CD4-positive, alpha-beta T cell (primary cell): ENCODE measurements at regions of chr16 and their contacts with region 1.

Region 1: GRCh38 chr16:84754353-84754856 is 54.6 kb downstream of the USP10 start:
- DNase-seq: peak in 13 of 14 experiments; percentile 22 to 92 (median 57)
- ATAC-seq: peak; percentile 58
- H3K4me3 ChIP-seq: peak overlapping the region; percentile 24
- H3K4me3 Mint-ChIP-seq: peak overlapping the region; percentile 72
- H3K27ac ChIP-seq: no peak overlapping the region
- H3K27ac Mint-ChIP-seq: peak overlapping the region; percentile 68
- H3K4me1 ChIP-seq: peaks cover 54% of the 10 kb centered on the region
- H3K4me1 Mint-ChIP-seq: peaks cover 89% of the 10 kb centered on the region
- H3K27me3 ChIP-seq: no peaks in the 10 kb centered on the region
- H3K27me3 Mint-ChIP-seq: no peaks in the 10 kb centered on the region
- CTCF ChIP-seq: peak; percentile 86

Region 2: DNA sequence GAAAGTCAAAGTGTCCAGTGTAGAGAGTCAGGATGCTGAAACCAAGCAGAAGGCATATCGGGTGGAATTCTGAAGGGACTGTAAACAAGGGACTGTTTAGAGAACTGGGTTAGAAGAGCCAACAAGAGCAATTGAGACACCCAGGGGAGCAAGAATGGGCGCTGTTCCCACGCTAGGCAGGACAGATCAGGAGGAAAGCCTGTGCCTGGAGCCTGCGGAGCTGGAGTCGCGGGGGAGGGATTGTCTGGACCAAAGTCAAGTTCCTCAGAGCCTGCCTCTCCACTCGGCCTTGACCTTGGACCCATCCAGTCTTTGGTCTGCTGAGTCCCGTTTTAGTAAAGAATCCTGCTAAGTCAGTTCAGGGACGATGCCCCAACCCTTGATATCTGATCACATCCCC is 120.8 kb before region 1 on chr16:
- CTCF ChIA-PET with region 1: no interaction called
- POLR2A ChIA-PET with region 1: no interaction called
- intact Hi-C with region 1: no loop called
- DNase-seq: no peak
- ATAC-seq: no peak
- H3K4me3 ChIP-seq: no peak overlapping the region
- H3K4me3 Mint-ChIP-seq: no peak overlapping the region
- H3K27ac ChIP-seq: no peak overlapping the region
- H3K27ac Mint-ChIP-seq: no peak overlapping the region
- H3K4me1 ChIP-seq: peaks cover 31% of the 10 kb centered on the region
- H3K4me1 Mint-ChIP-seq: peaks cover 58% of the 10 kb centered on the region
- H3K27me3 ChIP-seq: no peaks in the 10 kb centered on the region
- H3K27me3 Mint-ChIP-seq: no peaks in the 10 kb centered on the region
- CTCF ChIP-seq: no peak

Region 3: GRCh38 chr16:84738255-84739038 is 16.0 kb before region 1 on chr16:
- CTCF ChIA-PET with region 1: interaction called, 29 read pairs
- POLR2A ChIA-PET with region 1: no interaction called
- intact Hi-C with region 1: no loop called
- DNase-seq: peak; percentile 62 to 90 (median 66)
- ATAC-seq: peak; percentile 73
- H3K4me3 ChIP-seq: no peak overlapping the region
- H3K4me3 Mint-ChIP-seq: peak overlapping the region; percentile 3
- H3K27ac ChIP-seq: no peak overlapping the region
- H3K27ac Mint-ChIP-seq: peak overlapping the region; percentile 25
- H3K4me1 ChIP-seq: peaks cover 40% of the 10 kb centered on the region
- H3K4me1 Mint-ChIP-seq: peaks cover 37% of the 10 kb centered on the region
- H3K27me3 ChIP-seq: no peaks in the 10 kb centered on the region
- H3K27me3 Mint-ChIP-seq: no peaks in the 10 kb centered on the region
- CTCF ChIP-seq: peak; percentile 95

Region 4: DNA sequence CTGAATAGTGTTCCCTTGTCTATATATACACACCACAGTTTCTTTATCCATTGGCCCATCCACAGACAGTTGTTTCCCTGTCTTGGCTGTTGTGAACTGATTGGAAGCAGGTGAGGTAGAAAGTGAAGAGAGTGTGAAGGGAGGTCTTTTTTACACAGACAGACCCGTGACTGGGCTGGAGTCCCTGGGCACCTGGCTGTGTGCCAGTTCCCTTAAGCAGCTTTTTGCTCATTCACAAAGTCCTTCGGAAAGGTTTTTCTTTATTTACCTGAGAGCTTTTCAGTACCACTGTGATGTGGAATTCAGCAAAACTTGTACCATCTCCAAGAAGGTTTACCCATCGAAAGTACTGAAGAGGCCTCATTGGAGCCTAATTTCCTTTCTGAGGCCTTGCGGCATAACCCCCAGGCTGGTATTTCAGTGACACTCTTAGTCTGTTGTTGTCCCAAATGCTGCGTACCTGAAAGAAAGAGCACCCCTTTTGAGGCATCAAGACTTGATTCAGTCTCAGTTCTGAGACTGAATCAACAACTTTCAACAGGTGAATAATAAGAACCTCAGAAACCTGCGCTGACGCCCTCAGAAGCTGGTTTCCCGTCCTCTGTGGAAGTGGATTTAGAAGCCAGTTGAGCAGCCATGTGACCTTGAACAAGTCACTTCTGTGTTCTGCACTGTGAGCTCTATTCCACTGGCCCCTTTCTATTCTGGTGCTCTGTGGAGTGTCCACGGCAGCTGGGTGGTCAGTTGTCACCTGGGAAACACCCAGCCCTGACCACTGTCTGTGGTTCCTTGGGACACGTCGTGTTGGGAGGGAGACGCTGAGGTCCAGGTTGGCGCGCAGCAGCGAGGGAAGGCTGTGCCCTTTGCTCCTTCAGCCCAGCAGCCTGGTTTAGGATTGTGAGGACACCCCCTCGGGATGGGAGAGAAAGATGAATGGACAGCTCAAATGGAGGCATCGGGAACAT is 11.5 kb after region 1 on chr16:
- CTCF ChIA-PET with region 1: interaction called, 17 read pairs
- POLR2A ChIA-PET with region 1: no interaction called
- intact Hi-C with region 1: no loop called
- DNase-seq: peak in 5 of 14 experiments; percentile 18 to 50 (median 29)
- ATAC-seq: peak; percentile 65
- H3K4me3 ChIP-seq: no peak overlapping the region
- H3K4me3 Mint-ChIP-seq: peak overlapping the region; percentile 42
- H3K27ac ChIP-seq: peak overlapping the region; percentile 29 to 31
- H3K27ac Mint-ChIP-seq: peak overlapping the region; percentile 96
- H3K4me1 ChIP-seq: peaks cover 53% of the 10 kb centered on the region
- H3K4me1 Mint-ChIP-seq: peaks cover 65% of the 10 kb centered on the region
- H3K27me3 ChIP-seq: no peaks in the 10 kb centered on the region
- H3K27me3 Mint-ChIP-seq: no peaks in the 10 kb centered on the region
- CTCF ChIP-seq: no peak

Region 5: GRCh38 chr16:84952335-84953189 is 198.2 kb after region 1 on chr16:
- CTCF ChIA-PET with region 1: interaction called, 69 read pairs
- POLR2A ChIA-PET with region 1: interaction called, 10 read pairs
- intact Hi-C with region 1: loop called (anchors 1 kb)
- DNase-seq: peak; percentile 51 to 88 (median 62)
- ATAC-seq: peak; percentile 87
- H3K4me3 ChIP-seq: no peak overlapping the region
- H3K4me3 Mint-ChIP-seq: no peak overlapping the region
- H3K27ac ChIP-seq: no peak overlapping the region
- H3K27ac Mint-ChIP-seq: no peak overlapping the region
- H3K4me1 ChIP-seq: peaks cover 23% of the 10 kb centered on the region
- H3K4me1 Mint-ChIP-seq: peaks cover 11% of the 10 kb centered on the region
- H3K27me3 ChIP-seq: peaks cover 0 to 5% of the 10 kb centered on the region in 2 experiments
- H3K27me3 Mint-ChIP-seq: no peaks in the 10 kb centered on the region
- CTCF ChIP-seq: peak; percentile 88

Region 6: DNA sequence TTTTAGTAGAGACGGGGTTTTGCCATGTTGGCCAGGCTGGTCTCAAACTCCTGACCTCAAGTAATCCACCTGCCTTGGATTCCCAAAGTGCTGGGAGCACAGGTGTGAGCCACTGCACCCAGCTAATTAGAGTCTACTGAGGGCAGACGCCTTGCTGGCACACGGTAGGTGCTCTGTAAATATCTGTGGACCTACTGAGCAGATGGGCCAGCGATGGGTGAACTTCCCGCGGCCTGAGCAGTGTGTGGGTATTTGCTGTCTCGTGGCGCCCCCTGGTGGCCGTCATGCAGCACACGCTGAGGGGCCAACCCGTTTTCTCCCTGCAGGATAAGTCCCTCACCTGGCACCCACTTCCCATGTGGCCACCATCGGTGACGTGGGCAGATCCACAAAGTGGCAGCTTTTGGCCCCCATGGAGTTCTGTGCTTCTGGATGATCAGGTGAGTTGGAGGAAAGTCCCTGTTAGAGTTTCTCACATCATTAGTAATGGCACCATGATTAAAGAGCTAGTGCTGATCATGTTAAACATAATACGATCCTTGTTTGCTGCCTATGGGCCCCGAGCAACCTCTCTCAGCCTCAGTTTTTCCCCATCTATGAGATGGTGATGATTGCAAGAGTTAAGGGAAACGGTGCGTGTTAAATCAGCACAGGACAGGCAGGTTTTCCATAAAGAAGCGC is 216.2 kb after region 1 on chr16:
- CTCF ChIA-PET with region 1: interaction called, 21 read pairs
- POLR2A ChIA-PET with region 1: interaction called, 4 read pairs
- intact Hi-C with region 1: loop called (anchors 1 kb)
- DNase-seq: peak; percentile 66 to 91 (median 74)
- ATAC-seq: peak; percentile 99
- H3K4me3 ChIP-seq: no peak overlapping the region
- H3K4me3 Mint-ChIP-seq: no peak overlapping the region
- H3K27ac ChIP-seq: no peak overlapping the region
- H3K27ac Mint-ChIP-seq: no peak overlapping the region
- H3K4me1 ChIP-seq: peaks cover 9% of the 10 kb centered on the region
- H3K4me1 Mint-ChIP-seq: peaks cover 6% of the 10 kb centered on the region
- H3K27me3 ChIP-seq: no peaks in the 10 kb centered on the region
- H3K27me3 Mint-ChIP-seq: no peaks in the 10 kb centered on the region
- CTCF ChIP-seq: peak; percentile 91